ENCODE measurements at regions of chr11 and their contacts with region 1.

Region 1: GRCh38 chr11:85595285-85595884 is 31.8 kb downstream of the DLG2 start:
- DNase-seq: no peak
- ATAC-seq: peak; percentile 64
- H3K4me3 Mint-ChIP-seq: no peak overlapping the region
- H3K27ac Mint-ChIP-seq: no peak overlapping the region
- H3K4me1 Mint-ChIP-seq: no peaks in the 10 kb centered on the region
- H3K27me3 Mint-ChIP-seq: peaks cover 2% of the 10 kb centered on the region

Region 2: GRCh38 chr11:83827940-83828554 is 1767.3 kb before region 1 on chr11:
- CTCF ChIA-PET with region 1: no interaction called
- POLR2A ChIA-PET with region 1: no interaction called
- intact Hi-C with region 1: loop called in 1 of 2 experiments (anchors 10 kb)
- DNase-seq: no peak
- ATAC-seq: peak; percentile 51
- H3K4me3 Mint-ChIP-seq: no peak overlapping the region
- H3K27ac Mint-ChIP-seq: no peak overlapping the region
- H3K4me1 Mint-ChIP-seq: no peaks in the 10 kb centered on the region
- H3K27me3 Mint-ChIP-seq: peaks cover 8% of the 10 kb centered on the region

Region 3: DNA sequence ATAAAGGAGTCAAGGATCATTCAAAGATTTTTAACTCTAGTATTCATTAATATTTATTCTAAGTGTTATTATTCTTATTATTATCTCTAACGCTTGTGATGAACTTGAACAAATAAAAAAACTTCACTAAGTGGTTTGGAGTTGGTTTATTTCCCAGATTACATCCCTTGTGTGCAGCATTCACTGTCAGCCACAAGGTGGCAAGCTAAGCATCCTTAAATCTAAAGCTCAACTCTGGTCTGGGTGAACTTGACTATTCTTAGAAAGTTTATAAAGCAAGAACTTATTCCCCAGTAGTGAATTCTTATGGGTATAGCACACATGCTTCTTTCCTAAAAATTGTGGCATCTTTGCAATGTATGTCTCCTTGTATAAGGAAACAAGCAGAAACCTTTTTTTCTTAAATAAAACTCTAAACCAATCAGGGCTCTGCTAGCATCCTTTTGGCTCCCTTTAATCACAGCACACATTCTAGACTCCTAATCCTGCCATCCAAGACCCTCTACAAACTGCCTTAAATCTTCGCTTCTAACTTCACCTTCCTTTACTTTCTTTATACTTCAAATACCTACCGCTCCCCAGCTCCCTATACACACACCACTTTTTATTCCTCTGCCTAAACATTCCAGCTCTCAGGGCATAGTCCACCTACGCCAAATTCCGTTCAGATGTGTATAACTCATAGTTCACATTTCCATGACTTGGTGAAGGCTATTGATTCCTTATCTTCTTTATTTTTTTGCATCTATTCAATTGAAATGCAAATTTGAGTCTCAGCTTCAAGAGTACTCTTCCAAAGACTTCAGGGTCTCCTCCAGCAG is 1037.1 kb before region 1 on chr11:
- CTCF ChIA-PET with region 1: no interaction called
- POLR2A ChIA-PET with region 1: no interaction called
- intact Hi-C with region 1: loop called in 1 of 2 experiments (anchors 2 kb)
- DNase-seq: peak; percentile 34
- ATAC-seq: peak; percentile 55
- H3K4me3 Mint-ChIP-seq: no peak overlapping the region
- H3K27ac Mint-ChIP-seq: no peak overlapping the region
- H3K4me1 Mint-ChIP-seq: no peaks in the 10 kb centered on the region
- H3K27me3 Mint-ChIP-seq: no peaks in the 10 kb centered on the region

Region 4: DNA sequence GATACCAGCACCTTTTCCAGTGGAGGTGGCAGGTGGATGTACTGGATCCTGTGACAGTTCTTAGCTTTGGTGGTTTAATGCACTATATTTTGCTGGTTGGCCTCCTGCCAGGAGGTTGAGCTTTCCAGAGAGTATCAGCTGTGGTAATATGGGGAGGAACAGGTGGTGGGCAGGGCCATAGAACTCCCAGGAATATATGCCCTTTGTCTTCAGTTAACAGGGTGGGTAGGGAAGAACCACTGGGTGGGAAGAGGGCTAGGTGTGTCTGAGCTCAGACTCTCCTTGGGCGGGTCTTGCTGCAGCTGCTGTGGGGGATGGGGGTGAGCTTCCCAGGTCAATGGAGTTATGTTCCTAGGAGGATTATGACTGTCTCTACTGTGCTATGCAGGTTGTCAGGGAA is 172.1 kb before region 1 on chr11:
- CTCF ChIA-PET with region 1: no interaction called
- POLR2A ChIA-PET with region 1: no interaction called
- intact Hi-C with region 1: no loop called
- DNase-seq: no peak
- ATAC-seq: no peak
- H3K4me3 Mint-ChIP-seq: no peak overlapping the region
- H3K27ac Mint-ChIP-seq: no peak overlapping the region
- H3K4me1 Mint-ChIP-seq: no peaks in the 10 kb centered on the region
- H3K27me3 Mint-ChIP-seq: no peaks in the 10 kb centered on the region

Region 5: GRCh38 chr11:85810871-85811611 is 215.7 kb after region 1 on chr11 and contains the start of gene SYTL2:
- CTCF ChIA-PET with region 1: no interaction called
- POLR2A ChIA-PET with region 1: no interaction called
- intact Hi-C with region 1: no loop called
- DNase-seq: peak; percentile 84
- ATAC-seq: peak; percentile 95
- H3K4me3 Mint-ChIP-seq: peak within 1 kb of the TSS; percentile 73
- H3K27ac Mint-ChIP-seq: peak within 1 kb of the TSS; percentile 63
- H3K4me1 Mint-ChIP-seq: peaks cover 33% of the 10 kb centered on the region
- H3K27me3 Mint-ChIP-seq: peaks cover 8% of the 10 kb centered on the region
- total RNA-seq, gene SYTL2: 5.2 to 6.8 TPM

Region 6: DNA sequence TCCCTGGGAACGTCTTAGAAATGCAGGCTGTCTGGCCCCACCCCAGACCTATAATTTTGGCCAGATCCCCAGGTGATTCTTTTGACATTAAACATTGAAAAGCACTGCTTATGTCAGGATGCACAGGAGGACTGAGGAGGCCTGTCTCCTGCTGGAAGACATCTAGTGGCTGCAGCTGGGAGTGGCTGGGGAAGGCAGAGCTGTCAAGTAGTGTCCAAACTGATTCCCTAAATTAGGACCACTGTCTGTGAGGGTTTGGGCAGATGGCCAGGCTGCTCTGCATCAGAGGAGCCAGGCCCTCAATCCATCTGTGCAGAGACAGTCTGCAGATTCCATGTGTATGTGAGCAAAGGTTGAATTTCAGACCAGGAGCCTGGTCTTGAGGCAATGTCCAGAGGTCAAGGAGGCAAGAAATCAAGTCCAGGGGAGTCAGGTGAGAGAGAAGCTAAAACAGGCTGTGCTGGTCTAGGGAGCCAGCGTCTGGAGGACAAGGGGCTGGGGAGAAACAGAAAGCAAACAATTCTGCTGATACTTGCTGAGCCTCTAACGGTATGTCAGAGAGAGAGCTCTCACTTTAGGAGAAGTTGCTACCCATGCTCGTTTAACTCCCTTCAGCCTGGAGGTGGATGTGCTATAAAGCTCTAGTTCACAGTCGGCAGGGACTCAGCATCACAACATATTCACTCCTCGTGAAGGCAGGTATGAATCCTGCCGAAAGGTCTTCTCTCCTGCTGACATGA is 230.9 kb after region 1 on chr11:
- CTCF ChIA-PET with region 1: no interaction called
- POLR2A ChIA-PET with region 1: no interaction called
- intact Hi-C with region 1: loop called in 1 of 2 experiments (anchors 10 kb)
- DNase-seq: peak; percentile 48
- ATAC-seq: no peak
- H3K4me3 Mint-ChIP-seq: no peak overlapping the region
- H3K27ac Mint-ChIP-seq: peak overlapping the region; percentile 11
- H3K4me1 Mint-ChIP-seq: peaks cover 65% of the 10 kb centered on the region
- H3K27me3 Mint-ChIP-seq: no peaks in the 10 kb centered on the region

Region 7: GRCh38 chr11:85848006-85848405 is 252.6 kb after region 1 on chr11:
- CTCF ChIA-PET with region 1: no interaction called
- POLR2A ChIA-PET with region 1: no interaction called
- intact Hi-C with region 1: no loop called
- DNase-seq: no peak
- ATAC-seq: no peak
- H3K4me3 Mint-ChIP-seq: no peak overlapping the region
- H3K27ac Mint-ChIP-seq: no peak overlapping the region
- H3K4me1 Mint-ChIP-seq: peaks cover 12% of the 10 kb centered on the region
- H3K27me3 Mint-ChIP-seq: no peaks in the 10 kb centered on the region

Region 8: DNA sequence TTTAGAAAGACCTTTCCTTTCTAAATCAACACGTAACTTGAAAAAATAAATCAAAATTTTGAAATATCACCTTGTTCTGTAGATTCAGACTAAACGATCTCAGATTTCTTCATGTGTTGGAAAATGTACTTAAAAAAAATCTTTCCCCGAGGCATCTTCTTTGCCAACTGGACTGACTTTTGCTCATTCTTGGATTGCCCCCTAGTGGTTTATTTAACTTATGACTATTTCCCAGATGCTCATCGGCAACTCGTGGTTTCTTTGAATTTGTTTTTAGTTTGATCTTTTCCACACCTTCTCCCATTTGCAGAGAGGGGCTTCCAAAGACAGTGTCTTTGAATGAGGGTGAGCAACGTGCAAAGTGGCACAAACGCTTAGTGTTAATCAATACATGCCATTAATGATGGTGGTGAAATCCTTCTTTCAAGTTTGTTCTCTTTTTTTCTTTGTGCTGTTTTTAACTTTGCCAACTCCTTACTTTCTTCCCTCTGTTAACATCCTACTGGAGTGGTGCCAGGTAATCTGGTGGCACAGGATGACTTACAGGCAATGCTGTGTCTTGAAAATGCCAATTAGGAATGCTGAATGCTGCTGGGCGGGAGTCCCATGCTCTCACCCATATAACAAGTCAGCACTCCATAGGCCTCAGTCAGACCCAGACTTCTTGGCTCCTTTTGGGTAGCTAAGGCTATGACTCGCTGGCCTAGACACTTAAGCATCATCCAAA is 1223.2 kb after region 1 on chr11:
- CTCF ChIA-PET with region 1: no interaction called
- POLR2A ChIA-PET with region 1: no interaction called
- intact Hi-C with region 1: loop called in 1 of 2 experiments (anchors 5 kb)
- DNase-seq: no peak
- ATAC-seq: no peak
- H3K4me3 Mint-ChIP-seq: no peak overlapping the region
- H3K27ac Mint-ChIP-seq: no peak overlapping the region
- H3K4me1 Mint-ChIP-seq: peaks cover 6% of the 10 kb centered on the region
- H3K27me3 Mint-ChIP-seq: peaks cover 27% of the 10 kb centered on the region

Region 9: GRCh38 chr11:86919557-86920210 is 1324.3 kb after region 1 on chr11:
- CTCF ChIA-PET with region 1: no interaction called
- POLR2A ChIA-PET with region 1: no interaction called
- intact Hi-C with region 1: loop called in 1 of 2 experiments (anchors 5 kb)
- DNase-seq: no peak
- ATAC-seq: peak; percentile 51
- H3K4me3 Mint-ChIP-seq: no peak overlapping the region
- H3K27ac Mint-ChIP-seq: no peak overlapping the region
- H3K4me1 Mint-ChIP-seq: peaks cover 3% of the 10 kb centered on the region
- H3K27me3 Mint-ChIP-seq: no peaks in the 10 kb centered on the region

Measured in activated CD4-positive, alpha-beta T cell treated with anti-CD3 and anti-CD28 coated beads for 36 hours (primary cell).